Thyroid gland (tissue), 4 donors: ENCODE measurements at regions of chr9 and their contacts with region 1.

Region 1: DNA sequence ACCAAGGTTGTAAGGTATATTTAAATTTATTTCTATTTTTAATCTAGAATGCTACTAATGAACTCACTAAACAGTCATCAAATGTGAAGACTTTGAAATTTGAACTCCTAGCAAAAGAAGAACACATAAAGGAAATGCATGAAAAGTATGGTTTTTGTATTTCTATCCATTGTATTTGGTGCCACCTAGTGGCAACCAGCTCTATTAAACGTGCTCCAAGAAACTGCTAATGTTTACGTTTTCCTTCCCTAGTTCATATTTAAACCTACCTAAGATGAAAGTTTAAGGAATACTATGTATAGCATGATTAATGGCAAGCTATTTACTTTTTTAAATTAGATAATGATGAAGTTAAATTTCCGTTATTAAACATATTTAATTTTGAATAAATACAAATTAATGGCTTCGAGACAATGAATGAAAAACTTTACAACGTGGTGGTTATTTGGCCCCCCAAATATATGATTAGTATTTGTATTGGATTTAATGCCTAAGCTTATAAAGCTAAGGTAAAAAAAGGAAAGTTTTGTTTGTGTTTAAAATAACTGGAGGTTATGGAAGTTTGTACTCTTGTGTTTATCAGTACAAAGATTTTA is 115.9 kb upstream of the SH3GL2 start:
- DNase-seq: peak; percentile 12 to 25
- H3K4me3 ChIP-seq: no peak overlapping the region
- H3K27ac ChIP-seq: no peak overlapping the region
- H3K4me1 ChIP-seq: no peaks in the 10 kb centered on the region
- H3K27me3 ChIP-seq: no peaks in the 10 kb centered on the region
- CTCF ChIP-seq: peak; percentile 34 to 74 (median 66)
- POLR2A ChIP-seq: no peak

Region 2: DNA sequence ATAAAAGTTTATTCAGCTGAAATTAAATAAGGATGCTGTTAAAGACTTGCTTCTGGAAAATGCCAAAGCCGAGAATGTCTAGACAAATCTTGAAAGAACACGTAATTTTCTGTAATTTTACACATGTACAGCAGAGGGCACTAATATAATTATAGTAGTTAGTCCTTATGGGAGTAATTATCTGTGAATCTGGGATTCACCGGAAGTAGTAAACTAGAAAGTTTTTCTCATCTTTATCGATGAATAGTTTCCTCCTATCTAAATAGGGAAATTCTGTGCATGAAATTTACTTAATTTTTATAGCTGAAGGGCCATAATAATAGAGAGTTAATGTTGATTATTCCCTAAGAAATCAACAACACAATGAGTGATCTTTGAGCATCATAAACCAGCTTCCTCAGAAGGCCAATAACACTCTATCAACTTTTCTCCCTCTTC is 346.5 kb before region 1 on chr9:
- intact Hi-C with region 1: loop called (anchors 10 kb)
- DNase-seq: no peak
- H3K4me3 ChIP-seq: no peak overlapping the region
- H3K27ac ChIP-seq: no peak overlapping the region
- H3K4me1 ChIP-seq: no peaks in the 10 kb centered on the region
- H3K27me3 ChIP-seq: no peaks in the 10 kb centered on the region
- CTCF ChIP-seq: peak in 3 of 6 experiments; percentile 47 to 51 (median 47)
- POLR2A ChIP-seq: no peak

Region 3: DNA sequence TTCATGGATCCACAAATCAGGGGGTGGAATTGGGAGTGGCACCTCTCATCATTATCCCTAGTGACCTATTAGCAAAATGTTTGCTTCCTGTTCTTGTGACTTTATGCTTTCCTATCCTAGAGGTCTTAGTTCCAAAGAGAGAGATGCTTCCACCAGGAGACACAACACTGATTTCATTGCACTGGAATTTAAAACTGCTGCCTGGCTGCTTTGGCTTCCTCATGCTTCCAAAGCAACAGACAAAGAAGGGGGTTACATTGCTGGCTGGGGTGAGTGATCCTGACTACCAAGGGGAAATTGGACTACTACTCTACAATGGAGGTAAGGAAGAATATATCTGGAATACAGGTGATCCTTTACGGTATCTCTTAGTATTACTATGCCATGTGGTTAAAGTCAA is 46.7 kb after region 1 on chr9:
- intact Hi-C with region 1: no loop called
- DNase-seq: no peak
- H3K4me3 ChIP-seq: no peak overlapping the region
- H3K27ac ChIP-seq: no peak overlapping the region
- H3K4me1 ChIP-seq: no peaks in the 10 kb centered on the region
- H3K27me3 ChIP-seq: no peaks in the 10 kb centered on the region
- CTCF ChIP-seq: no peak
- POLR2A ChIP-seq: no peak

Region 4: GRCh38 chr9:17900606-17901005 is 437.6 kb after region 1 on chr9:
- intact Hi-C with region 1: no loop called
- DNase-seq: no peak
- H3K4me3 ChIP-seq: no peak overlapping the region
- H3K27ac ChIP-seq: no peak overlapping the region
- H3K4me1 ChIP-seq: no peaks in the 10 kb centered on the region
- H3K27me3 ChIP-seq: no peaks in the 10 kb centered on the region
- CTCF ChIP-seq: no peak
- POLR2A ChIP-seq: no peak